ENCODE measurements at regions of chr6 and their contacts with region 1.

Region 1: GRCh38 chr6:21634582-21634981 is 41.0 kb downstream of the SOX4 start:
- DNase-seq: peak in 1 of 2 donors; percentile 78
- H3K4me3 ChIP-seq: no peak overlapping the region
- H3K27ac ChIP-seq: peak overlapping the region; percentile 38 to 56
- H3K4me1 ChIP-seq: peaks cover 0 to 17% of the 10 kb centered on the region in 2 donors
- H3K27me3 ChIP-seq: no peaks in the 10 kb centered on the region
- CTCF ChIP-seq: no peak

Region 2: GRCh38 chr6:20891161-20891560 is 743.4 kb before region 1 on chr6:
- intact Hi-C with region 1: no loop called
- DNase-seq: no peak
- H3K4me3 ChIP-seq: no peak overlapping the region
- H3K27ac ChIP-seq: no peak overlapping the region
- H3K4me1 ChIP-seq: no peaks in the 10 kb centered on the region
- H3K27me3 ChIP-seq: no peaks in the 10 kb centered on the region
- CTCF ChIP-seq: no peak

Region 3: DNA sequence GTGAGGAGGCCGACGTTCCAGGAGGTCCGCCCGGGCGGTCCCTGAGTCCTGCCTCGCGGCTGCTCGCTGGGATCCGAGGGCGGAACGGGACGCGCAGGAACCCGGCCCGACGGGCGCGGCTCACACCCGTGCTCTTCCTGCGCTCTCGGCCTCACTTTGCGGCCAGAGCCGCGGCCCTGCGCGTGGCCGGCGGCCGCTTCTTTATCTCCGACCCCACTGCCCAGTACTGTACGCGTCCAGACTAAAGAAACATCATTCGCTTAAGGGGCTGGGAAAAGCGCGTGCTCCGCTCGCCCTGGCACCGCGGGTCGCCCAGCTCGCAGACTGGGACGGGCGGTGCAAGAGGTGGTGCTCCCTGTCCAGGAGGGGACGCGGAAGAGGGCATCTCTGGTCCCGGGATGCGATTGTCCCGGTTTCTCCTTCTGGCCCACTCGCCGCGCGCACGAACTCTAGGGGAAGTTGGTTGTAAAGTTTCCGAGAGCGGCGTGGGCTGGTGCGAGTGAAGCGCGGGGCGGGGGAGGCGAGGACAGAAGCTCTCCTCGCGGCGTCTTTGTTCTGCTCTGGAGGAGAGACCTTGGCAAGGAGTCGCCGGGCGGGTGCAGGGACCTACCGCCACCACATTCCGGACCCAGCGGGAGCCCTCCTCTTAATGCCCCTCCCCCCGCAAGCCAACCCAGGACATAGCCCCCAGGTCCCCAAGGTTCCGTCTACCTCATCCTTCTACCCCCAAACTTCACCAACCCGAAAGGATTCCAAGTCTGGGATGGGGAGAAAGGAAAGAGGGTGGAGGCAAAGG is 29.9 kb after region 1 on chr6:
- intact Hi-C with region 1: loop called (anchors 5 kb)
- DNase-seq: no peak
- H3K4me3 ChIP-seq: peak overlapping the region; percentile 66 to 76
- H3K27ac ChIP-seq: peak overlapping the region; percentile 52 to 66
- H3K4me1 ChIP-seq: peaks cover 0 to 10% of the 10 kb centered on the region in 2 donors
- H3K27me3 ChIP-seq: no peaks in the 10 kb centered on the region
- CTCF ChIP-seq: peak in 1 of 3 experiments; percentile 10